GM23248 (cell line): ENCODE measurements at regions of chrX and their contacts with region 1.

Region 1: DNA sequence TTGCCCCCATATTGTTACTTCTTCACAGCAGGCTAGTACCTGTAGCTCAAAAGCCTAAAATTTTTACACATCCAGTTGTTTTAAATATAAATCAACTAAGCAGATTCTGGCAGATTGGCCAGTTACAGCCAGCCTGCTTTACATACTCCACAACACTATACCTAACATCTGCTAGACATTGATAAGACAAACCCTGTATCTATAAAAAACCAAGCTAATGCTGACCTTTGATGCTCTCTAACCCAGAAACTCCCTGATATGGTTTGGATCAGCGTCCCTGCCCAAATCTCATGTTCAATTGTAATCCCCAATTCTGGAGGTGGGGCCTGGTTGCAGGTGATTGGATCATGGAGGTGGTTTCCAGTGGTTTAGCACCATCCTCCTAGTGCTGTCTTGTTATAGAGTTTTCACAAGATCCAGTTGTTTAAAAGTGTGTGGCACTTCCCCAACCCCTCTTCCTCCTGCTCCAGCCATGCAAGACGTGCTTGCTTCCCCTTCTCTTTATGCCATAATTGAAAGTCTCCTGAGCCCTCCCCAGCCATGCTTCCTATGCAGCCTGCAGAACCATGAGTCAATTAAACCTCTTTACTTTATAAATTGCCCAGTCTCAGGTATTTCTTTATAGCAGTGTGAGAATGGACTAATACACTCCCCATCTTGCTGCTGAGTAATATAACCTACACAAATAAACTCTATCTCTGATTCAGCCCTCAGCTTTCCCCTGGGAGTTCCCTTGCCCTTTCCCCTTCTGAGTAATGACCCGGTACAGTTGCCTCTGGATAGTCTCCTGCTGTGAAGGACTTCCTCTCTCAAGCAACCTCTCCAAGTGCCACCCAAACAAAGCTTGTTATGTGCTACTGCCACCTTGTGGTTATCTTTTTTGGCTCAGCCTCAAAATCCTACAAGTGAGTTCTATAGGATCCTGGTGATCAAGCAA is 39.6 kb downstream of the ZCCHC13 start:
- DNase-seq: peak; percentile 92
- H3K4me3 ChIP-seq: no peak overlapping the region
- H3K27ac ChIP-seq: no peak overlapping the region
- H3K4me1 ChIP-seq: peaks cover 6% of the 10 kb centered on the region
- H3K27me3 ChIP-seq: no peaks in the 10 kb centered on the region

Region 2: GRCh38 chrX:74015379-74016019 is 328.1 kb before region 1 on chrX:
- in situ Hi-C with region 1: loop called (anchors 25 kb)
- DNase-seq: peak; percentile 56
- H3K4me3 ChIP-seq: no peak overlapping the region
- H3K27ac ChIP-seq: no peak overlapping the region
- H3K4me1 ChIP-seq: no peaks in the 10 kb centered on the region
- H3K27me3 ChIP-seq: no peaks in the 10 kb centered on the region